Right ventricle myocardium superior (tissue), 1 donor: ENCODE measurements at regions of chr13 and their contacts with region 1.

Region 1: GRCh38 chr13:44449999-44450708 is 76.5 kb downstream of the SERP2 start:
- DNase-seq: no peak
- ATAC-seq: no peak

Region 2: DNA sequence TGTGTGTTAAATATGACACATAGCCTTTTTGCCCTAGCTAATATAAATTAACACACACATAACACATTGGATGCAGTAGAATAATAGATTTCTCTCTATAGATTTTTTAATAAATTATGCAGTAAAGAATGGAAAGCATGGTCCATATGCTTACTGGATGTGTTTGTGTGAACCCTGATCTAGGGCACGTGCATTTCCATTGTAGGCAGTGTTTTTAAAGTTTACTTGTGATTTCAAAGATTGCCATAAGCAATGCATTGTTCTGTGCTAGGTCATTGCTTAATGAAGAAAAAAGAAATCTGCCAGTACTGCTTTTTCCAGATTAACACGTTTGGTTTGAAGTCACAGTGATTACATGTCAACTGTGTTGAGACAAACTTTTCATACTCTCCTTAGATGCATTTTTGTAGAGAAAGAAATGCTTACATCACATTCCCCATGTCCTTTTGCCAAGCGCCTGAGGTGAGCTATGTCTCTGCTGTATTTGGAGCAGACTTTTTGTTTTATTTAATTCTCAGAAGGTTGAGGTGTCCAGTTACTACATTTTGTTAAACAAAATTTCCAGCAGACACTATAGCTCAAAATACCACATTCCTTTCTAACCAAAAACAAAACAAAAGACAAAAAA is 554.3 kb before region 1 on chr13:
- intact Hi-C with region 1: loop called (anchors 5 kb)
- DNase-seq: no peak
- ATAC-seq: no peak

Region 3: DNA sequence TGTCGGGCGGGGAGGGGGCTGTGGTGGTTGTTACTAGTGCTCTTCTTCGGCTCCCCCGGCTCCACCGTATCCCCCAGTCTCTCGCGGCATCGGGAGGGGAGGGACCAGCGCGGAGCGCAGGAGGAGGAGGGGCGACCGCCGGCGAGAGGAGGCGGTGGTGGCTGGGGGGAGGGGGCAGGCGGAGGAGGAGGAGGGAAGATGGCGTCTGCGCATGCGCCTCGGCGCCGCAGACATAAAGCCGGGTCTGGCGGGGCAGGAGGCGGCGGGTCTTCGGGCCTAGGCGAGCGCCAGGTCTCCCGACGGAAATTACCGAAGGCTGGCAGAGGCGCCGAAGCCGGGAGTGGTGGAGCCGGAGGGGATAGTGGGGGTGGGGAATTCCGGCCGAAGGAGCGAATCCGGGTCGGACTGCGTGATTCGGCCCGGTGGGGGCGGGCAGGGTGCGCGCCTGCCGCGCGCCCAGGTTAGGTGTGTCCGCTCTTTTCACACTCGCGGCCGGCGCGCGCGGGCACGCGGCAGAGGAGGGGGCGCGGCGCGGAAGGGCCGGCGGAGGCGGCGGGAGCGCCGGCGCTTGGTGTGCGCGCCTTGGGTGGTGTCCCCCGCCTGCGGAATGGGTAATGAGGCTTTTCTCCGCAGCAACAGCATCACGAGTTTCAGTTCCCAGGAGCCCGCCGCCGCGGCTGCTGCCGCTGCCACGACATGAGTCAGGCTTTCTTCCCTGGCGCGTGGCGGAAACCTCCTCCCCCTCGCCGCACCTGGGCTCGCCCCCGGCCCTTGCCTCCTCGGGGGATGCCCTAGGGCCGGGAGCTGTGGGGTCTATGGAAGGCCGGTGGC is 127.3 kb after region 1 on chr13:
- intact Hi-C with region 1: no loop called
- DNase-seq: peak; percentile 99
- ATAC-seq: peak; percentile 95